Activated CD4-positive, alpha-beta memory T cell treated with anti-CD3 and anti-CD28 coated beads, Interleukin-2, amount 10 ng/mL, durations not matched to agents 7 days and 5 days (primary cell): ENCODE measurements at regions of chr4 and their contacts with region 1.

Region 1: DNA sequence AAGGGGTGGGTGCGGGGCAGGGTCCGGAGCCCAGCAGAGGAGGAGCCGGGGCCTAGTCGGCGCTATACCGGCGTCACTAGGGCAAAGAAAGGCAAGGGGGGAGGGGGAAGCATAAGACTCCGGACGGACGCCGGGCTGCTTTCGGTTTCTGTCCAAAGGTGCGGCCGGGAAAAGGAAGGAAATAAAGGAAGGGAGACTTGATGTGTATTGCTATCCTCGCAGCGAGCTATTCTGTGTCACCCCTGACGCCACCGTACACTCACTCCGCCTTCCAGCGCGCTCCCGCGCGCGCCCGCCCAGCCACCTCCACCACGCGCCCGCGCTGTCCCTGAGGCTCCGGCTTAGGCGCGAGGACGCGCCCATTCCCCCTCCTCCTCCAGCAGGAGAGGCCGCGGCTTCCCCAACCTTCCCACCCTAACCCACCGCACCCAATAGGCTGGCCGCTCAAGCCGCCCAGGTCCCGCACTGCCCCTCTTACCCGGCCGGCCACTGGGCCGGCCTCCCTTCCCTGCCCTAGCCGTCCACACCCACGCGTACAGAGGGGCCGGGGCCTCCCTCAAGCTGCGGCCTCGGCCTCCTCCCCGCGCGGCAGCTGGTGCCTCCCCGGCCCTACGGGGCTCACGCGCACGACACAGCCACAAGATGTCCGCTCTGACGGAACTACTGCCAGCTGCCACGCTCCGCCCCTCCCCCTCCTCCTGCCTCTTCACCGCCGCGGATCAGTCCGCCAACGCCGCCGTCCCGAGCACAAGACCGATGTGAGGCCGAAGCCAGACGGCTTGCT is at the start of gene UBE2D3:
- DNase-seq: peak; percentile 95
- H3K4me3 Mint-ChIP-seq: no peak within 1 kb of the TSS
- H3K27ac Mint-ChIP-seq: no peak within 1 kb of the TSS
- H3K4me1 Mint-ChIP-seq: peaks cover 39% of the 10 kb centered on the region
- H3K27me3 Mint-ChIP-seq: no peaks in the 10 kb centered on the region
- total RNA-seq, gene UBE2D3: 378 to 380 TPM

Region 2: GRCh38 chr4:102344954-102345794 is 481.9 kb before region 1 on chr4 and contains the start of gene SLC39A8:
- CTCF ChIA-PET with region 1: interaction called, 4 read pairs
- POLR2A ChIA-PET with region 1: interaction called, 39 read pairs
- DNase-seq: peak; percentile 91
- H3K4me3 Mint-ChIP-seq: peak within 1 kb of the TSS; percentile 78
- H3K27ac Mint-ChIP-seq: peak within 1 kb of the TSS; percentile 92
- H3K4me1 Mint-ChIP-seq: peaks cover 44% of the 10 kb centered on the region
- H3K27me3 Mint-ChIP-seq: peaks cover 7% of the 10 kb centered on the region
- total RNA-seq, gene SLC39A8: 101 to 103 TPM

Region 3: GRCh38 chr4:102598086-102598761 is 228.9 kb before region 1 on chr4:
- CTCF ChIA-PET with region 1: no interaction called
- POLR2A ChIA-PET with region 1: interaction called, 12 read pairs
- DNase-seq: no peak
- H3K4me3 Mint-ChIP-seq: peak overlapping the region; percentile 43
- H3K27ac Mint-ChIP-seq: peak overlapping the region; percentile 92
- H3K4me1 Mint-ChIP-seq: peaks cover 73% of the 10 kb centered on the region
- H3K27me3 Mint-ChIP-seq: no peaks in the 10 kb centered on the region

Region 4: GRCh38 chr4:102789317-102789717 is 37.8 kb before region 1 on chr4:
- CTCF ChIA-PET with region 1: interaction called, 3 read pairs
- POLR2A ChIA-PET with region 1: interaction called, 10 read pairs
- DNase-seq: no peak
- H3K4me3 Mint-ChIP-seq: no peak overlapping the region
- H3K27ac Mint-ChIP-seq: no peak overlapping the region
- H3K4me1 Mint-ChIP-seq: peaks cover 17% of the 10 kb centered on the region
- H3K27me3 Mint-ChIP-seq: no peaks in the 10 kb centered on the region

Region 5: DNA sequence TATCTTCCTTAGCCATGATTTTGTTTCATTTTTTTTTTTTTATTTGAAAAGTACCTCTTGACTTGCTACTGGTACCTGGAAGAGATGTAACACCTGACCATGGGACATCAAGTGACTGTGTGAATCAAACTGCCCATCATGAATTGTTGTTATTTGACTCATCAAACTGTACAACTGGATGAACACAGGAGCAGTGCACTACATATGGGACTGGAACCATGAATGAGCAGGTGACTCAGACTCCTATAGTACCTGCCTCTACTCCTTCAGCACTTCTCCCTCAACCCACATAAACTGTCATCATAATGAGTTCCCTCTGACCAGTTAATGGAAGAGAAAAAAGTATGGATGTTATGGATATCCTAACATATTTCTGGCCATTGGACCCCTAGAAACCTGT is 16.2 kb after region 1 on chr4:
- CTCF ChIA-PET with region 1: interaction called, 6 read pairs
- POLR2A ChIA-PET with region 1: interaction called, 36 read pairs
- DNase-seq: no peak
- H3K4me3 Mint-ChIP-seq: no peak overlapping the region
- H3K27ac Mint-ChIP-seq: no peak overlapping the region
- H3K4me1 Mint-ChIP-seq: no peaks in the 10 kb centered on the region
- H3K27me3 Mint-ChIP-seq: no peaks in the 10 kb centered on the region

Region 6: GRCh38 chr4:103019308-103020124 is 192.4 kb after region 1 on chr4 and contains the start of gene SLC9B1:
- CTCF ChIA-PET with region 1: no interaction called
- POLR2A ChIA-PET with region 1: interaction called, 18 read pairs
- DNase-seq: peak; percentile 95
- H3K4me3 Mint-ChIP-seq: peak within 1 kb of the TSS; percentile 81
- H3K27ac Mint-ChIP-seq: peak within 1 kb of the TSS; percentile 85
- H3K4me1 Mint-ChIP-seq: peaks cover 21% of the 10 kb centered on the region
- H3K27me3 Mint-ChIP-seq: no peaks in the 10 kb centered on the region
- total RNA-seq, gene SLC9B1: 1.9 to 2.3 TPM